ENCODE measurements at regions of chr2 and their contacts with region 1.

Region 1: DNA sequence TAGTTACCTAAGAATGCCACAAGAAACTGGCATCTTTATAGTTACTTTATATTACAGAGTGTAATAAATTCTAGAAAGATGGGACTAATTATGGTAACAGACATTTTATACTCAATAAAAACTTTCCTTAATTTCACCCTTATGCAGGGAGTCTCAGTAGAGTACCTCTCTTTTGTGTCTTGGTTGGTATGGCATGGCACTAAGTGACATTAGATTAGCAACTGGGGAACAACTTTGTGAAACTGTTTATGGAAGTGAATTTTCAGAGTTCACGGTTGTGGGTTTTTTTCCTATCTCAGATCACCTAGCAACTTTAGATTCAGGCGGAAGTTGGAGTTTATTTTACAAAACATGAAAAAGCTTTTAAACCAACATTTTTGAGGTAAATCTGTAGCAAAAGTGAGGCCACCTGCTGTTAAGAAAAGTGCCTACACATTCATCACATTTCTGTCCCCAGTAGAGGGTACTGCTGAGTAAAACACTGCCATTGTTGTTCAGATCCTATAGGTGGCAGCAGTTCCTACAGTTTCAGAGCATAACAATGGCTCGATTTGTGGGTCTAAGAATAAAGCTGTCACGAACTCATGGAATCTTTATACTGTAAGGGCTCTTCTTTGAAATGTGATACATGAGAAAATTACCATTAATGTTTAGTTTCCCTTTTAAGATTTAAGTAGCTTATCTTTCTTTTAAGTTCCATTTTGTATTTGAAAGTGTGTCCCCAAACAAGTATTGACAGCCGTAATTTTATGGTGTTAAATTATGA is 117.6 kb downstream of the CAMKMT start:
- DNase-seq: peak; percentile 71
- H3K4me3 ChIP-seq: no peak overlapping the region
- H3K27ac ChIP-seq: no peak overlapping the region
- H3K27me3 ChIP-seq: no peaks in the 10 kb centered on the region
- CTCF ChIP-seq: peak; percentile 100

Region 2: GRCh38 chr2:43798300-43798699 is 681.0 kb before region 1 on chr2:
- CTCF ChIA-PET with region 1: no interaction called
- POLR2A ChIA-PET with region 1: no interaction called
- DNase-seq: no peak
- H3K4me3 ChIP-seq: no peak overlapping the region
- H3K27ac ChIP-seq: no peak overlapping the region
- H3K27me3 ChIP-seq: no peaks in the 10 kb centered on the region
- CTCF ChIP-seq: peak; percentile 18; the same call in 1 of the 2 replicates

Region 3: GRCh38 chr2:44244129-44244871 is 235.0 kb before region 1 on chr2:
- CTCF ChIA-PET with region 1: interaction called, 17 read pairs
- POLR2A ChIA-PET with region 1: no interaction called
- DNase-seq: peak; percentile 30
- H3K4me3 ChIP-seq: no peak overlapping the region
- H3K27ac ChIP-seq: no peak overlapping the region
- H3K27me3 ChIP-seq: no peaks in the 10 kb centered on the region
- CTCF ChIP-seq: peak; percentile 66

Region 4: GRCh38 chr2:44429034-44429433 is 50.3 kb before region 1 on chr2:
- CTCF ChIA-PET with region 1: interaction called, 16 read pairs
- POLR2A ChIA-PET with region 1: no interaction called
- DNase-seq: peak; percentile 3
- H3K4me3 ChIP-seq: no peak overlapping the region
- H3K27ac ChIP-seq: no peak overlapping the region
- H3K27me3 ChIP-seq: no peaks in the 10 kb centered on the region
- CTCF ChIP-seq: no peak

Region 5: DNA sequence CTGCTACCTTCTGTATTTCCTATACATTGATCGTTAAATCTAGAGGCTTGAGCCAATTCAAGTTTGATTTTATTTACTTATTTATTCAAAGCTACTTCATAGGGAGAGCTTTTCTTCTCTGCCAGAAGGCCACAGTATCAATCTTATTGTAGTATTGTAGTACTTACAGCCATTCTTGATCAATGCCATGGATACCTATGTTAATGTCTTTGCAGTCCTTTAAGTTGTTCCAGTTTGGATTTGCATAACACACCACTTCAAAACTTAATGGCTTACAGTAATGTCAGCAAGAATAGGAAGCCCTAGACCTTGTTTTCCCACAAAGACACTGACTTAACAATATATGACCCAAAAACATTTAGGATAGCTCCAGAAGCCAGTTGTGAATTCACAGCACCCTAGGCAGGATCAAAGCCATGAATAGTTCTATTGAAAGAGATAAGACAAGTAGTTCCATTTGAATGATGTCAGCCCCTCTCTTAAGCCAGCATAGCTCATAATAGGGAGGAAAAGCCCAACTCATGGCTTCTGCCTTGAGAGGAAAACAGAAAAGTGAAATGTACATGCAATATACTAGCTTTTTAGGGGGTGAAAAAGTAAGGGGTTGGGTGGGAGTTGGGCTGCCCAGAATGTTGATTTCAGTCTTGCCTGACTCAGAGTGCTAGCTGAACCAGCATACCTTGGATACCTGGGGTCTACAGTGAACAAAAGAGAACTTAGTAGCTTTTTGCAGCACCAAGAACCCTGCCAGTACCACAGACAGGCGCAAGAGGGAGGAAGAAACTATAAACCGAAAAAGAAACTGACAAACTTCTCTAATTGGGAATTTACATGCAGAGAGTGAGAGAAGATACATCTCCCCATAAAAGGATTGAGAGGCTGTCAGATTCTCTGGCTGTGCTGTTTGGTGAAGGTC is 16.1 kb before region 1 on chr2:
- CTCF ChIA-PET with region 1: interaction called, 95 read pairs
- POLR2A ChIA-PET with region 1: no interaction called
- DNase-seq: no peak
- H3K4me3 ChIP-seq: no peak overlapping the region
- H3K27ac ChIP-seq: no peak overlapping the region
- H3K27me3 ChIP-seq: no peaks in the 10 kb centered on the region
- CTCF ChIP-seq: no peak

Region 6: GRCh38 chr2:44515416-44515815 is 36.1 kb after region 1 on chr2:
- CTCF ChIA-PET with region 1: interaction called, 40 read pairs
- POLR2A ChIA-PET with region 1: no interaction called
- DNase-seq: no peak
- H3K4me3 ChIP-seq: no peak overlapping the region
- H3K27ac ChIP-seq: no peak overlapping the region
- H3K27me3 ChIP-seq: no peaks in the 10 kb centered on the region
- CTCF ChIP-seq: no peak

Region 7: GRCh38 chr2:44722026-44722625 is 242.8 kb after region 1 on chr2:
- CTCF ChIA-PET with region 1: interaction called, 46 read pairs
- POLR2A ChIA-PET with region 1: no interaction called
- DNase-seq: no peak
- H3K4me3 ChIP-seq: no peak overlapping the region
- H3K27ac ChIP-seq: no peak overlapping the region
- H3K27me3 ChIP-seq: peaks cover 2% of the 10 kb centered on the region
- CTCF ChIP-seq: no peak